ENCODE measurements at regions of chr20 and their contacts with region 1.

Region 1: DNA sequence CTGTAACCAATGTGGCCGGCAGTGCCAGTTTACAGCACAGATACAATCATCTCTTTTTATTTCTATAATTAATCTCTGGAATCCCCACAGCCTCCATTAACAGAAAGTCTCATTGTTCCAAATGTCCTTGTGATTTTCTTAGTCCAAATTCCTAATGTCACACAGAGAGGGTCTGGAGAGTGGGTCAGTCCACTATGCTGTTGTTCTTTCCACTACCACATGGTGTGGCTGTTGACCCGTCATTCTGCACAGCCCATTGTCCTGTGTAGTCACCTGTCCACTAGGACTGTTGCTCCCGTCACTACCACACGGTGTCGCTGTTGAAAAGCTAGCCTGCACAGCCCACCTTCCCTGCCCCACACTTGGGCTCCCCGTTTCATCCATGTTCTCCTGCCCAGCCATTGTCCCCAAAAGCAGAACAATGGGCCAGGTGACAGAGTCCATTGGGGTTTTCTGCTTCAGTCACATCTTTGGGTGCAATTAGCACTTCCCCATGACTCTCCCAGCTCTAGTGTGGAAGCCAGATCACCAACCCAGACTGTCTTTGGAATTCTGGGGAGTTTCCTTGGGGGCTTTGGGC is 8.6 kb upstream of the LBP start:
- DNase-seq: peak; percentile 97
- ATAC-seq: peak; percentile 76
- H3K4me3 Mint-ChIP-seq: no peak overlapping the region
- H3K27ac Mint-ChIP-seq: no peak overlapping the region
- H3K4me1 Mint-ChIP-seq: peaks cover 35% of the 10 kb centered on the region
- H3K27me3 Mint-ChIP-seq: no peaks in the 10 kb centered on the region; the same call in 1 of the 2 replicates
- CTCF ChIP-seq: peak; percentile 96

Region 2: DNA sequence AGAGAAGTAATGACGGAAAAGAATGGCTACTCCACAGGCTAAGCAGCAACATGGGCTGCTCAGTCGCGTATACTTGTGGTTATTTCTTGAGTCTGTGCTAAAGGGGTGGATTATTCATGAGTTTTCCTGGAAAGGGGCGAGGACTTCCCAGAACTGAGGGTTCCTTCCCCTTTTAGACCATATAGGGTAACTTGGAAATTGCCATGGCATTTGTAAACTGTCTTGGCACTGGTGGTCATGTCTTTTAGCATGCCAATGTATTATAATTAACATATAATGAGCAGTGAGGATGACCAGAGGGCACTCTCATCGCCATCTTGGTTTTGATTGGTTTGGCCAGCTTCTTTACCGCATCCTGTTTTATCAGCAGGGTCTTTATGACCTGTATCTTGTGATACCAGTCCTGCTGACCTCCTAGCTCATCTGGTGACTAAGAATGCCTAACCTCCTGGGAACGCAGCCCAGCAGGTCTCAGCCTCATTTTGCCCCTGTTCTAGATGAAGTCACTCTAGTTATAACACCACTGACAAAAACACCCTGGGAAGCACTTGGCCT is 20.1 kb after region 1 on chr20:
- CTCF ChIA-PET with region 1: interaction called, 329 read pairs
- POLR2A ChIA-PET with region 1: interaction called, 7 read pairs
- DNase-seq: no peak
- ATAC-seq: no peak
- H3K4me3 Mint-ChIP-seq: no peak overlapping the region
- H3K27ac Mint-ChIP-seq: no peak overlapping the region
- H3K4me1 Mint-ChIP-seq: peaks cover 31% of the 10 kb centered on the region
- H3K27me3 Mint-ChIP-seq: no peaks in the 10 kb centered on the region
- CTCF ChIP-seq: no peak

Region 3: DNA sequence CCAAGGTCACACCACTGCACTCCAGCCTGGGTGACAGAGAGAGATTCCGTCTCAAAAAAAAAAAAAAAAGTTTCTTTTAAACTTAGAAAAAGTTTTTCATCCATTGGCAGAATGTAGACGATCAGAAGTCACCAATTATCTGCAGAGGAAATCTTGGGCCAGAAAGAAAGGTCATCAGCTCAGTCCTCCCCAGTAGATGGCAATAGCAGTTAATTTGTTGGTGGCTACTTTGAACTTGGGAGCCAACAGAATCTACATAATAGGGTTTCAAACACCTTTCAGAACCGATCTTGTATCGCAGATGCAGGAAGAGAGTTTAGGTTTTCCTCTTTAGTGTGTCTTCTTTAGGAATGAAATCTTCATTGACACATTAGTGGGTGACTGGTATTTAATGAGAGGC is 50.3 kb after region 1 on chr20:
- CTCF ChIA-PET with region 1: interaction called, 14 read pairs
- POLR2A ChIA-PET with region 1: no interaction called
- DNase-seq: no peak
- ATAC-seq: no peak; the same call in 1 of the 2 replicates
- H3K4me3 Mint-ChIP-seq: no peak overlapping the region
- H3K27ac Mint-ChIP-seq: no peak overlapping the region
- H3K4me1 Mint-ChIP-seq: peaks cover 8% of the 10 kb centered on the region
- H3K27me3 Mint-ChIP-seq: no peaks in the 10 kb centered on the region
- CTCF ChIP-seq: no peak

Region 4: GRCh38 chr20:38412877-38413577 is 75.4 kb after region 1 on chr20:
- CTCF ChIA-PET with region 1: interaction called, 208 read pairs
- POLR2A ChIA-PET with region 1: interaction called, 5 read pairs
- DNase-seq: peak; percentile 4
- ATAC-seq: no peak
- H3K4me3 Mint-ChIP-seq: no peak overlapping the region
- H3K27ac Mint-ChIP-seq: no peak overlapping the region
- H3K4me1 Mint-ChIP-seq: peaks cover 20% of the 10 kb centered on the region
- H3K27me3 Mint-ChIP-seq: no peaks in the 10 kb centered on the region
- CTCF ChIP-seq: no peak

Region 5: DNA sequence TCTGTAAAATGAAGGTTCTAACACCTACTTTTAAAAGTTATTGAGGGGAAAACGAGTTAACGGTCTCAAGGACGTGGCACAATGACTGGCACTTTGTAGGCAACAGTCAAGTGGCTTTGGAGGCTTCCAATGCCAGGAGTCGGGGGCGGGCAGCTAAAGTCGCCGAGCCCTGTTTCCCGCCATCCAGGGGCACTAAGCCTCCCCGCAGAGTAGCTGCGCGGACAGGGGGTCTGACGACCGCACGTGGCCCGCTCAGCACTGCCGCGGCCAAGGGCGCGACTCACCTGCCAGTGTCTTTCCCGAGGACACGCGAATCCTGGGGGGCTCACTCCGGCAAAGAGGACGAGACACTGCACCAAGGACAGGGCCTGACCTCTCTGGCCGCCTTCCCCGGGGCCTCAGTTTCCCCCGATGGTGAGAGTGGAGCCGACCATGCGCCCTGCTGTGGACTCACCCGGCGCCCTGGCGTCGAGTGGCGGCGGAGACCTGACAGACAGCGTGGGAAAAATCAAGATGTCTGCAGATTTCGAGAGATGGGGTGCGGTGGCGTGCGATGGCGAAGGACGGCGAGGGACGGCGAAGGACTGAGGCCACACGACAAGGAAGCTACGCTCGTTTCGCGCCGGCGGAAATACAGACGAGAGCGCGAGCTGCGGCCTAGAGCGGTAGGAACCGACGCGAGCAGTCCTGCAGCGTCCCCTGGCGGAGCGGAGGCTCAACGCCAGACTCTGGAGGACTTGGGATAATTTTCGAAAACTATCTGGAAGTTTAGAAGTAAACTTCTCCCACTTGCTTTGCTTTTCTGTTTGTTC is 97.3 kb after region 1 on chr20 and contains the start of gene SNHG17:
- CTCF ChIA-PET with region 1: interaction called, 10 read pairs
- POLR2A ChIA-PET with region 1: no interaction called
- DNase-seq: peak; percentile 88
- ATAC-seq: peak; percentile 78
- H3K4me3 Mint-ChIP-seq: peak within 1 kb of the TSS; percentile 95
- H3K27ac Mint-ChIP-seq: peak within 1 kb of the TSS; percentile 94
- H3K4me1 Mint-ChIP-seq: peaks cover 24% of the 10 kb centered on the region
- H3K27me3 Mint-ChIP-seq: peaks cover 3% of the 10 kb centered on the region; the same call in 1 of the 2 replicates
- CTCF ChIP-seq: peak; percentile 97
- total RNA-seq, gene SNHG17: 52.0 to 71.6 TPM (median 57.4 TPM) in 3 replicates